Activated CD4-positive, alpha-beta T cell treated with anti-CD3 and anti-CD28 coated beads for 36 hours (primary cell): ENCODE measurements at regions of chr11 and their contacts with region 1.

Region 1: GRCh38 chr11:130131961-130132850 is 27.4 kb upstream of the ST14 start:
- DNase-seq: peak; percentile 58
- ATAC-seq: peak; percentile 88
- H3K4me3 Mint-ChIP-seq: no peak overlapping the region
- H3K27ac Mint-ChIP-seq: no peak overlapping the region
- H3K4me1 Mint-ChIP-seq: no peaks in the 10 kb centered on the region
- H3K27me3 Mint-ChIP-seq: no peaks in the 10 kb centered on the region

Region 2: DNA sequence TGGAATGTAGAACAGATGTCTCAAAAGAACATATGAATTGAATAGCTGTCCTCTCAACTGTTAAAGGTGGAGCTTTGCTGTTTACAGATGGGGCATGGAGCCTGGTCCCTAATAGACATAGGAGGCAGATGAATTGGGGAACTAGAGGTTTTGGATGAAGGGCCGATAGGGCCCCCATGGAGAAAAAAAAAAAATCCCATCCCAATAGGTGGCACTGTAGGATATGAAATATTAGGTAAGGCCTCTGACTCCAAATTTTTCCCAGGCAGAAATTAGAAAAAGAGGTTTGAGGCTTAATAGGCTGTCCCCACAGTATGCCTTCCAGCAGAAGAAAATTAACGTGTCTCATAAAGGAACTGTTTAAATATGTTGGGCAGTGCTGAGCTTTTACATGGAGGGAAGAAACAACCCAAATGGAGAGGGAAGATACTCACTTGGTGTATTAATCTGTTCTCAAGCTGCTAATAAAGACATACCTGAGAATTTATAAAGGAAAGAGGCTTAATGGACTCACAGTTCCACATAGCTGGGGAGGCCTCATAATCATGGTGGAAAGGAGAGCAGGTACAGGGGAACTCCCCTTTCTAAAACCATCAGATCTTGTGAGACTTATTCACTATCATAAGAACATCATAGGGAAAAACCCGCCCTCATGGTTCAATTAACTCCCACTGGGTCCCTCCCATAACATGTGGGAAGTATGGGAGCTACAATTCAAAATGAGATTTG is 346.7 kb before region 1 on chr11:
- CTCF ChIA-PET with region 1: interaction called, 3 read pairs
- POLR2A ChIA-PET with region 1: no interaction called
- intact Hi-C with region 1: loop called in 1 of 2 experiments (anchors 5 kb)
- DNase-seq: no peak
- ATAC-seq: peak; percentile 30
- H3K4me3 Mint-ChIP-seq: no peak overlapping the region
- H3K27ac Mint-ChIP-seq: no peak overlapping the region
- H3K4me1 Mint-ChIP-seq: peaks cover 13% of the 10 kb centered on the region
- H3K27me3 Mint-ChIP-seq: no peaks in the 10 kb centered on the region

Region 3: GRCh38 chr11:129895126-129896041 is 236.8 kb before region 1 on chr11 and contains the start of gene NFRKB:
- CTCF ChIA-PET with region 1: interaction called, 7 read pairs
- POLR2A ChIA-PET with region 1: interaction called, 3 read pairs
- intact Hi-C with region 1: loop called in 1 of 2 experiments (anchors 1 kb)
- DNase-seq: peak; percentile 94
- ATAC-seq: peak; percentile 99
- H3K4me3 Mint-ChIP-seq: peak within 1 kb of the TSS; percentile 84
- H3K27ac Mint-ChIP-seq: peak within 1 kb of the TSS; percentile 71
- H3K4me1 Mint-ChIP-seq: peaks cover 41% of the 10 kb centered on the region
- H3K27me3 Mint-ChIP-seq: no peaks in the 10 kb centered on the region
- total RNA-seq, gene NFRKB: 27.3 to 31.0 TPM

Region 4: DNA sequence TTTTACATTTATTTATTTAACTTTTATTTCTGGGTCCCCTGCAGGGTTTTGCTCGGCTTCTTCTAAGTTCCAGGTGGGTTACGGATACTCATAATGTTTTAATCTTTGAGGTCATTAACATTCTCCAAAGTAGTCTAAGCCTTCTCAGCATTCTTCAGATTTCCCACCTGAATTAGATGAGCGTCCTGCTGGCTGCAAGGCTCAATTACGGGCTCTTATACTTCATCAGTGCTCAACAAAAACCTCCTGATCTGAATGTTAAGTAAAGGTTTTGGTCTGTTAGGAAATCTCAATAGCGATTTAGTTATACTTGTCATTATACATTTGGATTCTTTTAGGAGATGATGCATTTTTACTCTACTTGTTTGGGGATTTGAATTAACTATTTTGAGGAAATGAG is 209.5 kb before region 1 on chr11:
- CTCF ChIA-PET with region 1: interaction called, 225 read pairs
- POLR2A ChIA-PET with region 1: no interaction called
- intact Hi-C with region 1: loop called (anchors 1 kb)
- DNase-seq: no peak
- ATAC-seq: no peak
- H3K4me3 Mint-ChIP-seq: no peak overlapping the region
- H3K27ac Mint-ChIP-seq: no peak overlapping the region
- H3K4me1 Mint-ChIP-seq: peaks cover 6% of the 10 kb centered on the region
- H3K27me3 Mint-ChIP-seq: no peaks in the 10 kb centered on the region

Region 5: GRCh38 chr11:130069684-130070108 is 62.5 kb before region 1 on chr11 and contains the start of gene APLP2:
- CTCF ChIA-PET with region 1: interaction called, 11 read pairs
- POLR2A ChIA-PET with region 1: no interaction called
- intact Hi-C with region 1: loop called in 1 of 2 experiments (anchors 1 kb)
- DNase-seq: peak; percentile 99
- ATAC-seq: peak; percentile 96
- H3K4me3 Mint-ChIP-seq: peak within 1 kb of the TSS; percentile 84
- H3K27ac Mint-ChIP-seq: peak within 1 kb of the TSS; percentile 91
- H3K4me1 Mint-ChIP-seq: peaks cover 22% of the 10 kb centered on the region
- H3K27me3 Mint-ChIP-seq: peaks cover 6% of the 10 kb centered on the region
- total RNA-seq, gene APLP2: 34.6 to 40.2 TPM

Region 6: GRCh38 chr11:130340671-130341319 is 208.6 kb after region 1 on chr11:
- CTCF ChIA-PET with region 1: no interaction called
- POLR2A ChIA-PET with region 1: no interaction called
- intact Hi-C with region 1: no loop called
- DNase-seq: peak; percentile 37
- ATAC-seq: peak; percentile 88
- H3K4me3 Mint-ChIP-seq: no peak overlapping the region
- H3K27ac Mint-ChIP-seq: no peak overlapping the region
- H3K4me1 Mint-ChIP-seq: peaks cover 11% of the 10 kb centered on the region
- H3K27me3 Mint-ChIP-seq: no peaks in the 10 kb centered on the region